ENCODE measurements at regions of chrX and their contacts with region 1.

Region 1: DNA sequence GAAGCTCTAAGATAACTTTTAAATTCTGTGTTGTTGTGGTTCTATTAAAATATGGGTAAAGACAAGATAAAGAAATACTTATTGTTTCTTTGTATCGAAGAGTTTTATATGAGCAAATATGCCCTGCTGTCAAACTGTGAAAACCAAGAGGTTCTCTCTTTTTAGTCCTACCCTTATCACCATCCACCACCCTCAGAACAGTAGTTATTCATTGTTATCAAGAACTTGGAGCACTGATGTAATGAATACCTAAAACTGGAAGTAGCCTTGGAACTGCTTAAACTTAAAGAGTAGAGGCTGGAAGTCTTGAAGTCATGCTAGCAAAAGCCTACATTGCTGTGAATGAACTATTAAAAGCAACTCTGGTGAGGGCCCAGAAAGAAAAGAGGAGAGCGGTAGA is 9.2 kb downstream of the PIR start:
- DNase-seq: no peak
- H3K4me3 ChIP-seq: no peak overlapping the region
- CTCF ChIP-seq: no peak
- POLR2A ChIP-seq: no peak

Region 2: DNA sequence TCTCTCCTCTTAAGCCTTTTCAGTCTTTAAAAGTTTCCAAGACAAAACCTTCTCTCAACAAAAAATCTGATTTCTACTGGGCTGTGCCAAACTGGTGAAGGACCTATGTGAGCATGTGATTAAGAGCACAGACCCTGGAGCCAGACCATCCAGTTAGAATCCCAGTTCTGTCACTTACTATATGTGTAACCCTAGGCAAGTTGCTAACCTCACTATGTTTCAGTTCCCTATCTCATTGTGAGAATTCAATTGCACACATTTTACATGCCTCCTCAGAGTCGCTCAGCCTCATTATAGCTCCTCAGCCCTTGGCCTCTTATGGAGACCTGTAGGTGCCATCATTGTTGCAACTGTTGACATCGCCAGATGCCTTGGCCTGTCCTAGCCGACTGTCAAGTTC is 45.6 kb before region 1 on chrX:
- intact Hi-C with region 1: no loop called
- DNase-seq: no peak
- H3K4me3 ChIP-seq: no peak overlapping the region
- CTCF ChIP-seq: no peak
- POLR2A ChIP-seq: no peak

Region 3: GRCh38 chrX:15769300-15769954 is 285.5 kb after region 1 on chrX:
- intact Hi-C with region 1: loop called (anchors 5 kb)
- DNase-seq: no peak
- H3K4me3 ChIP-seq: no peak overlapping the region
- CTCF ChIP-seq: no peak
- POLR2A ChIP-seq: no peak

Measured in lower leg skin (tissue), 4 donors.